ENCODE measurements at regions of chr17 and their contacts with region 1.

Region 1: DNA sequence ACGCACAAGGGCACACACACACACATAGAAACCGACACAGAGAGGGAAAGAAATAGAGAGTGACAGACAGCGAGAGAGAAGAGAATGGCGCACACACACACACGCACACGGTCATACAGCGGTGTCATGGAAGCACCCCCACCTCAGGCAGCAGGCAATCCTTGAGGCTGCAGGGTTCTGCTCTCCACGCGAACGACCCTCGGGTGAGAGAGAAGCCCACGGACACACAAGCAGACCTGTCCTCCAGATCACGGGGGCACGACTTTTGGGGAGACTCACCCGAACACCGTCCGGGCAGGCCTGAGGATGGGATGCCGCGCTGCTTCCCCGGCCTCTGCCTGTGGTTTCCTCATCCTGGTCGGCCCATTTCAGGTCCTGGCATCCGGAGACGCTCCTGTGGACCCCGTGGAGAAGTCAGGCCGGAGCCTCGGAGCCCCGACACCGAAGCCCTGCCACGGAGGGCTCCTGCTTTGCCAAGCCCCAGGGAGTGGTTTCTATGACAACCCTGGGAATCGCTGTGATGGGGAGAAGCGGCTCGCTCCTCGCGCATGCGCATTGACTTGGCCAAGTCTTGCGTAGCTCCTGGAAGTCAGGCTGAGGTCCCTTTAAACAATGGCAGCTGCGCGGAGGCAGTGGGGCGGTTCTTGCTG is 118.2 kb upstream of the KCNJ18 start:
- DNase-seq: peak; percentile 27
- H3K4me3 ChIP-seq: no peak overlapping the region
- H3K27ac ChIP-seq: no peak overlapping the region
- H3K4me1 ChIP-seq: no peaks in the 10 kb centered on the region
- H3K27me3 ChIP-seq: no peaks in the 10 kb centered on the region
- CTCF ChIP-seq: no peak

Region 2: DNA sequence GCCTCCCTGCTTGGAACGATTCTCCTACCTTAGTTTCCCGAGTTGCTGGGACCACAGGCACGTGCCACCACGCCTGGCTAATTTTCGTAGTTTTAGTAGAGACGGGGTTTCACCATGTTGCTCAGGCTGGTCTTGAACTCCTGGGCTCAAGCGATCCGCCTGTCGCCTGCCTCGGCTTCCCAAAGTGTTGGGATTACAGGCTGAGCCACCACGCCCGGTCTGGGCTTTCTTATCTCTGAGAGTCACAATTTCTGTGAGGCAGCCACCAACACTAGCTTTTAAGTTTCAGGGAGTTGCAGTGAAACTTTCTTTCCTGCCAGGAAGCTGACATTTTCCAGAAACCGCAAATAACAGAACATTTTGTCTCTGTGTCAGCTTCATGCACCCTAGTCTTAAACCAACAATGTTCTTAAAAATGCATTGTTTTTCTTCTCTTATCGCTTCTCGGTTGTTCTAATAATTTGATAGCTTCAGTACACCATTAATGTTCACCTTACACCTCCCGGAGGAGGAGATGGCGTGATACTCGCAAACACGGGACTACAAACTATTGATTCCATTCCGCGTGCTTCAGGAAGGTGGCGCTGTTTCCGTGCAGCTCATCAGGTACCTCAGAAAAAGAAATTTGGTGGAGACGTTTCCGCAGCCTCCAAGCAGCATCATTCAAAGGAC is 454.7 kb before region 1 on chr17:
- CTCF ChIA-PET with region 1: interaction called, 13 read pairs
- dilution Hi-C with region 1: no loop called
- in situ Hi-C with region 1: no loop called
- intact Hi-C with region 1: no loop called
- DNase-seq: peak; percentile 59
- H3K4me3 ChIP-seq: no peak overlapping the region
- H3K27ac ChIP-seq: no peak overlapping the region
- H3K4me1 ChIP-seq: no peaks in the 10 kb centered on the region
- H3K27me3 ChIP-seq: no peaks in the 10 kb centered on the region
- CTCF ChIP-seq: peak; percentile 94 to 98

Measured in mammary epithelial cell (primary cell).